ENCODE measurements at regions of chr4 and their contacts with region 1.

Region 1: GRCh38 chr4:118989098-118990080 is 100.7 kb downstream of the SYNPO2 start:
- DNase-seq: peak; percentile 96
- ATAC-seq: peak; percentile 63
- H3K4me3 ChIP-seq: no peak overlapping the region
- H3K27ac ChIP-seq: peak overlapping the region; percentile 99
- H3K4me1 ChIP-seq: peaks cover 26% of the 10 kb centered on the region
- H3K27me3 ChIP-seq: no peaks in the 10 kb centered on the region
- CTCF ChIP-seq: no peak
- POLR2A ChIP-seq: no peak
- RAD21 ChIP-seq: no peak

Region 2: DNA sequence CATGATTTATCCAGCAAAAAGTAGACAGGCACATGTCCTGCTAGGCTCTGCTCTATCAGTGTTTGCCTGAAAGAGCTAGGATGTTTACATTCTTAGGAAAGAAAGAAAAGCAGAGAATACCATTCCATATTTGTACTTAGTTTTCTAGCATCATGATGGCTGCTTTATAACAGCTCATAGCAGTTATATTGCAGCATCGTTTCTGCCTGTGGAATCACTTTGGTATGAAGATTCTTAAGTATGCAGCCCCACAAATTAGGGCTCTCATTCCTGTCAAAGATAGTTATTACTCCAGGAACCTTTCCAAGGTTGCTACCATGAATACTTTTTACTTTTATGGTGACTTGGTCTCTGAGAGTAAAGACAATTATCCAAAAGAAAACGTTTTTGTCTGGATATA is 27.2 kb after region 1 on chr4:
- CTCF ChIA-PET with region 1: no interaction called
- POLR2A ChIA-PET with region 1: interaction called, 5 read pairs
- dilution Hi-C with region 1: no loop called
- in situ Hi-C with region 1: no loop called
- intact Hi-C with region 1: loop called (anchors 2 kb)
- DNase-seq: peak; percentile 93
- ATAC-seq: peak; percentile 91
- H3K4me3 ChIP-seq: no peak overlapping the region
- H3K27ac ChIP-seq: peak overlapping the region; percentile 99; the same call in 1 of the 2 replicates
- H3K4me1 ChIP-seq: peaks cover 11% of the 10 kb centered on the region
- H3K27me3 ChIP-seq: no peaks in the 10 kb centered on the region
- CTCF ChIP-seq: no peak
- POLR2A ChIP-seq: no peak
- RAD21 ChIP-seq: no peak

Region 3: DNA sequence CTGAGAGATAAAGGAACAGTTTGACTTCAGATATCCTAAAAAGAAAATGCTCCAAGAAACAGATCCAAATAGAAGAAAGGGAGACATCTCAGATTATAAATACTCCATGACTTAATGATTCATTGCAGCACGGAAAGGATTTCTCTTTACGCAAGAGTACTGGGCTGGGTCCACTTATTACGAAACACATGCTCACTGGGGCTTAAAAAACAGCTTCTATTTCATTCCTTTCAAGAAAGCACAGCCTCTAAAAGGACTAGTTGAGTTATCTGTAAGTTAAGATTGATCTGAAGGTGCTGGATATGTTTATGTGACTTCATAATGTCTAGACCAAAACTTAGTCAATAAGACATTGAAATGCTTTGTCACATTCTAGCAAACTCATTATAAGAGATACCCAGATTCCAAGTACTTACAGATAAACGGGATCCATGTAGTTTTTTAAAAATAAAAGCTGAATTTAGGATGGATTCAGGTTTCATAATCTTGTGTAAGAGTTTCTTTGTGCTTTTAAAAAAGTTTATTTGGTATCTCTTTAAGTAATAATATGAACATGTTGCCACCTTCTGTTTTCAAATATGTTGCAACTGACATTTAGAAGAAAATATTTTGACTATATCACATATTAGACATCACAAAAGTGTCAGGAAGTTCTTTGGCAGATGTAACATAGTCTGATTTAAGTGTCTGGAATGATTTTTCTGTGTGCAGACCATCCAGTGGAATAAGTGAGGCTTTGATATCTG is 36.7 kb after region 1 on chr4:
- CTCF ChIA-PET with region 1: no interaction called
- POLR2A ChIA-PET with region 1: interaction called, 3 read pairs
- dilution Hi-C with region 1: no loop called
- in situ Hi-C with region 1: loop called (anchors 5 kb)
- intact Hi-C with region 1: loop called (anchors 2 kb)
- DNase-seq: peak; percentile 93
- ATAC-seq: peak; percentile 68
- H3K4me3 ChIP-seq: no peak overlapping the region
- H3K27ac ChIP-seq: peak overlapping the region; percentile 89
- H3K4me1 ChIP-seq: peaks cover 11% of the 10 kb centered on the region
- H3K27me3 ChIP-seq: no peaks in the 10 kb centered on the region
- CTCF ChIP-seq: no peak
- POLR2A ChIP-seq: no peak
- RAD21 ChIP-seq: no peak

Region 4: GRCh38 chr4:119286377-119287002 is 297.1 kb after region 1 on chr4:
- CTCF ChIA-PET with region 1: no interaction called
- POLR2A ChIA-PET with region 1: no interaction called
- dilution Hi-C with region 1: no loop called
- in situ Hi-C with region 1: loop called (anchors 5 kb)
- intact Hi-C with region 1: no loop called
- DNase-seq: peak; percentile 83
- ATAC-seq: peak; percentile 53; the same call in 1 of the 2 replicates
- H3K4me3 ChIP-seq: no peak overlapping the region
- H3K27ac ChIP-seq: no peak overlapping the region; the same call in 1 of the 2 replicates
- H3K4me1 ChIP-seq: no peaks in the 10 kb centered on the region
- H3K27me3 ChIP-seq: no peaks in the 10 kb centered on the region
- CTCF ChIP-seq: peak; percentile 70
- POLR2A ChIP-seq: no peak
- RAD21 ChIP-seq: peak; percentile 79

Region 5: DNA sequence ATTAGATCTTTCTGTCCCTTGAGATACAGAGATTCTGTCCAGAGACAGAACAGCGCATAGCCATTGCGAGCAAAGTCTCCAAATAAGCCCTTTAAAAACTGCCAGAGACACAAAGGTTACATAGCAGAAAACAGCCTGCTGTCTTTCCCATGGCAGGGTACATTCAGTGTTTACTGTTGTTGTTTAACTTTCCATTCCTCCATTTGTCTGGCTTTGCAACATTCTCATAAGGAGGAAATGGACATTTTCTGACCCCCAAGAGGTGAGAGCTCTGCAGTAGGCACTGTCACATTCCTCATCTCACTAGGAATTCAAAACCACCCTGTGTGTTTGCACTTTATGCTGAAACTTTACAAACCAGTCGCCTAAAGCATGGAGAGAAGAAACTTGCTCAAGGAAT is 590.9 kb after region 1 on chr4:
- CTCF ChIA-PET with region 1: no interaction called
- POLR2A ChIA-PET with region 1: no interaction called
- dilution Hi-C with region 1: no loop called
- in situ Hi-C with region 1: no loop called
- intact Hi-C with region 1: no loop called
- DNase-seq: no peak
- ATAC-seq: peak; percentile 11
- H3K4me3 ChIP-seq: no peak overlapping the region
- H3K27ac ChIP-seq: no peak overlapping the region
- H3K4me1 ChIP-seq: peaks cover 8% of the 10 kb centered on the region
- H3K27me3 ChIP-seq: no peaks in the 10 kb centered on the region
- CTCF ChIP-seq: no peak
- POLR2A ChIP-seq: no peak
- RAD21 ChIP-seq: no peak